ENCODE measurements at regions of chr3 and their contacts with region 1.

Region 1: DNA sequence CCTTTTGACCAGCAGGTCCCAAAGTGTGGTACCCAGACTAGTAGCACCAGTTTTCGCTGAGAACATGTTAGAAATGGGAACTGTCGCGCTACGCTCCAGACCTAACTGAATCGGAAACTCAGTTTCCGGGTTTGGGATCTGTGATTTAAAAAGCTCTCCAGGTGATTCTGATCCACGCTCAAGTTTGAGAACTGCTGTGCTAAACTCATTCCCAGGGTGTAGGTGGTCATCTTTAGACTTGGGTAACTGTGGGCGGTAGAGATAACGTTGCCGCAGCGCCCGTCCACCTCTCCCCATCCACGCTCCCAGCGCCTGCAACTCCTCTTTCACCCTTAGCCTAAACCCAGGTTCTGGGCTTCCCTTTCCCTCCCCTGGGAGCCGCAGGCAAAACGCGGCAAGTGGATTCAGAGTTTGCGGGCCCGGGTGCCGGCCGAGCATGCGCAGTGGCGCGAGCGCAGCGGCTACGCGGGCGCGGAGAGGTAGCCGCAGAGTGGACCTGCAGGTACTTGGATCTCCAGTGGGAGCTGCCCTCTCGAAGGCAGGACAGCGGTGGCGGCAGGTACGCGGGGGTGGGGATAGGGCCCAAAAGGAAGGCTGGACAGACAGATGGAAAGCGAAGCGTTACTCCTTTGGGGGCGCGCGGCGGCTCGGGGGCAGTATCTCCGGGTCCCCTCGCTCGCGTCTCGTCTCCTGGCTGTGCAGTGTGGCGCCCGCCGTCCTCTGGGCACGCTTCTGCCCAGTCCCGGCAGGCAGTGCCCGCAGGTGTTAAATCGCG is at the start of gene PLS1:
- DNase-seq: peak; percentile 71 to 92 (median 90)
- ATAC-seq: peak; percentile 94 to 97
- H3K4me3 ChIP-seq: peak within 1 kb of the TSS; percentile 48
- H3K27ac ChIP-seq: no peak within 1 kb of the TSS
- H3K4me1 ChIP-seq: no peaks in the 10 kb centered on the region
- H3K27me3 ChIP-seq: no peaks in the 10 kb centered on the region
- total RNA-seq, gene PLS1: 1.2 to 2.4 (median 1.4) TPM

Region 2: DNA sequence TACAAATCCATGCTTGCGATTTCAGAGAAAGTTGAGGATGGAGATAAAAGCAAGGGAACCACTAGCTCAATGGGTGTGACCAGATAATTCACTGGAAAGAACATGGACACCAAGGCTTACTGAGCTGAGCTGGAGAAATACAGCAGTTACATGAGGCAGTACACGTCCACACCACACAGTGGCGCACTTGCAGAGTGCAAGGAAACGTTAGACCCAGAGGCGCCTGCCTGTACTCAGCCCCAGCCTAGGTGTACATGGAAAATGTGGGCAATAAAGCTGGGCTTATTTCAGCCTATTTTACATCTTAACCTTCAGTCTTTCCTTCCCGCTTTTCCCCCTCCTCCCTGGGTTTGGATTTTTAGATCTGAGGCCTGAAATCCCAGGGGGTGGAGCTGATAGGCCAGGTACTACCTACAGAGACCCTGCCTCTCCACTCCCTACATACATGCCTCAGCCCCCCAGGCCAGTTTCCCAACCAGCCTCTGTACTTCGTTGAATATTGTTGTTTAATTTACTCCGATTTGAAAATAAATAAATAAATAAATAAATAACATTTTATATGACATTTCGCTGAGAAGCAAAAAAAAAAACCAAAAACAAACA is 232.7 kb after region 1 on chr3:
- intact Hi-C with region 1: loop called in 1 of 4 experiments (anchors 10 kb)
- DNase-seq: peak; percentile 80 to 94 (median 89)
- ATAC-seq: peak; percentile 94 to 95
- H3K4me3 ChIP-seq: no peak overlapping the region
- H3K27ac ChIP-seq: no peak overlapping the region
- H3K4me1 ChIP-seq: no peaks in the 10 kb centered on the region
- H3K27me3 ChIP-seq: no peaks in the 10 kb centered on the region